ENCODE measurements at regions of chr1 and their contacts with region 1.

Region 1: GRCh38 chr1:9275567-9276034 is 17.1 kb upstream of the SPSB1 start:
- DNase-seq: no peak

Region 2: GRCh38 chr1:9018333-9018732 is 257.3 kb before region 1 on chr1:
- intact Hi-C with region 1: no loop called
- DNase-seq: no peak

Region 3: DNA sequence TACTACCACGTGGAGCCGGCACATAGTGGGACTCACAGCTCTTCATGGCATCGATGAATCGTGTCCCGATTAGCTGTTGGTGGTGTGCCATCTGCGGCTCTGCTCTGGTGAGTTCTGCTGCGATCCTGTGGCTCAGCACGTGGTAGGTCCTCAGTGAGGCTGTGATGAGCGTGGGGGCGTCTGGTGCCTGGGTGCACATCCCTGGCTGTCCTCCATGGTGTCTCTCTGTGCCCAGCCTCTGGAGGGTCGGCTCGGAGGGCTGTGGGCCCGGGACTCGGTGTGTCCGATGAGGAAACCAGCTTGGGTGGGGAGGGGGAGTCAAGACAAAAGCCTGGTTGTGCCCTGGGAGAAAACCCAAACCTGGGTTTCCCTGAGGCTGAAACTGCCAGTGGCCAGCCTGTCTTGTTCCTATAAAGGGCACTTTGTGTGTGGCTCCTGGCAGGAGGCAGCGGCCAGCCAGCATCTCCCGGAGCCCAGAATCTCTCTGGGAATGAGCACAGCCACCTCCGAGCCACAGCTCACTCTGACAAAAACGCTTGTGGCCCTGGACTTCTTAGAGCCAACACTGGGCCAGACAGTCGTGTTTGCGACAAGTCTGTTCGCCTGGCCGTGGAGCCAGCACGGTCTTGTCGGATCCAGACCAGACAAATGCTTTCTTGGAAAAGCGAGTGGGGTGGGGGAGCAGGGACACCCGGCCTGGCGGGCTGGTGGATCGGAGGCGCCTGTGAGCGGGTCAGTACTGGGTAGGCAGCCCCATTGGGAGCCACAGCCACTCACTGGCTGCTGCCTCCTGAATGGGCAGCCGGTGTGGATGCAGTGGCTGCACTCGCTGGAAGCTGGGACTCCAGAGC is 48.9 kb after region 1 on chr1:
- intact Hi-C with region 1: loop called in 1 of 2 experiments (anchors 1 kb)
- DNase-seq: no peak

Region 4: DNA sequence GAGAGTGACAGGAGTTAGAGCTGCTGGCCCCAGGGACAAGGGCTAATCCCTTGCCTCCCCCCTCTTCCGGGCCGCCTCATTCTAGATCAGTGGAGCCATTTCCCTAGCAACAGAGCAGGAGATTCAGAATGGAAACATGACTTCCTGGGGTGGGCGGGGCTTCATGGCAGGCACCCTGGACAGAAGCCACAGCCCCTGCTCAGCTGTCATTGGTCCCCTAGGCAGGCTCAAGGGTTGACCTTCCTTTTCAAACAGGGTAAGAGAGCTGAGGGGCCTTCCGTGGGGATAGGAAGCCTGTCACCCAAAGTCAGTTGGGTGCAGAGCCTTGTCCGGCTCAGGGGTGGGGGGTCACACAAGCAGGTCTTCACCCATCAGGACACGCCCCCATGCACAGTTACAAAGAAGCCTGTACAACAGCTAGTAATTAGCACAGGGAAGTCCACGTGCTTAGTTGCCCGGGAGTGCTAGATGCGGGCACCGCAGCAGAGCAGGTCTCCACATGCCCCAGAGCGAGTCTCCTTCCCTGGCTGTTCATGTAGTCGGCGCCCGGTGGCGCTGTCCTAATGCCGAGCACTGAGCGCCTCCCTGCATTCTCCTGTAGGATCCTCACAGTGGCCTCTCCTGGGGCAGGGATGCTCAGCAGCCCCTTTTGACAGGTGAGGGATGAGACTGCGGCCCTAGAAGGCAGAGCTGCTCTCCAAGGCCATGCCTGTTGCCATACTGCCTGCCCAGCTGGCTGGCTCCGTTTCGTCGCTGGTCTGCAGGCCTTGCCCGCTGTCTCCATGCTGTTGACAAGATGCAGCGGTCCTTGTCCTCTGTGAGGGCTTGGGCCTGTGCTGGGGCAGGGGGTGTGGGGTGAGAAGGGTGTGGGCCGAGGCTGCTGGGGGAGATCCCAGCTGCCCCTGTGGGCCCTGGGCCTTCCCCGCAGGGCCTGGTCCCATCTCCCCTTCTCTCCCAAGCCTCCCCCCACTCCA is 318.2 kb after region 1 on chr1:
- intact Hi-C with region 1: no loop called
- DNase-seq: peak; percentile 89